HCT116 (cell line): ENCODE measurements at regions of chr14 and their contacts with region 1.

Region 1: GRCh38 chr14:69460093-69460701 is 24.3 kb upstream of the PLEKHD1 start:
- DNase-seq: peak; percentile 63
- ATAC-seq: peak; percentile 97
- H3K4me3 ChIP-seq: no peak overlapping the region
- H3K27ac ChIP-seq: no peak overlapping the region
- H3K4me1 ChIP-seq: no peaks in the 10 kb centered on the region
- H3K27me3 ChIP-seq: no peaks in the 10 kb centered on the region
- CTCF ChIP-seq: peak; percentile 68 to 82 (median 80); a peak in 5 of 6 replicates
- POLR2A ChIP-seq: no peak
- RAD21 ChIP-seq: peak; percentile 79

Region 2: DNA sequence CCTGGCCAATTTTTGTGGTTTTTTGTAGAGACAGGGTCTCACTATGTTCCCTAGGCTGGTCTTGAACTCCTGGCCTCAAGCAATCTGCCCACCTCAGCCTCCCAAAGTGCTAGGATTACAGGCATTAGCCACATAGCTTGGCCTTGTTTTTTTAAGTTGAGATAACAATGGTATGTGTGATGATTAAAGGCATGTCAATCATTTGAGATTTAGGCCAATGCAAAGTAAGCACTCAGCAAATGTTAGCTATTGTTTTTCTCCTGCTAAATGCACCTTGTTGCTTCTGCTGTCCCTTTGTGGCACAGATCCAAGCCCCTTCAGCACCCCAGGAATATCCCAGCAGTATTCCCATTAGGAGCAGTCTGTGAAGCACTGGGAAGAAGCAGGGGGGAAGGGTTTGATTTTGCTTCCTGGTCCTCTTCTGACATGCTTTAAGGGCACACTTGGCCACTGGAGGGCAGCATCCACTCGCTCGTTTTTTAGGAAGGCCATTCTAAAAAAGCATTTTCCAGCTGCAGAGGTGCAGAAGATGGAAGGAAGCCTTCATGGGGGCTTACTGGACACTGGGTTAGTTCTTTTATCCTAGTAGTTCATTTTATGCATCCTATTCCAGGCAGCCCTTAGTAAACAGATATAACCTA is 597.1 kb before region 1 on chr14:
- CTCF ChIA-PET with region 1: interaction called, 3 read pairs
- POLR2A ChIA-PET with region 1: no interaction called
- RAD21 ChIA-PET with region 1: no interaction called
- intact Hi-C with region 1: loop called (anchors 5 kb)
- DNase-seq: peak; percentile 67
- ATAC-seq: peak; percentile 96
- H3K4me3 ChIP-seq: no peak overlapping the region
- H3K27ac ChIP-seq: no peak overlapping the region
- H3K4me1 ChIP-seq: peaks cover 0 to 4% of the 10 kb centered on the region in 2 experiments; a peak in 2 of 4 replicates
- H3K27me3 ChIP-seq: no peaks in the 10 kb centered on the region
- CTCF ChIP-seq: peak; percentile 78 to 86 (median 85)
- POLR2A ChIP-seq: no peak
- RAD21 ChIP-seq: peak; percentile 93